ENCODE measurements at regions of chr12 and their contacts with region 1.

Region 1: GRCh38 chr12:59055204-59055839 is 135.0 kb upstream of the LRIG3 start:
- DNase-seq: peak; percentile 88
- H3K4me3 Mint-ChIP-seq: peak overlapping the region; percentile 9
- H3K27ac Mint-ChIP-seq: peak overlapping the region; percentile 94
- H3K4me1 Mint-ChIP-seq: peaks cover 28% of the 10 kb centered on the region
- H3K27me3 Mint-ChIP-seq: no peaks in the 10 kb centered on the region
- CTCF ChIP-seq: no peak

Region 2: DNA sequence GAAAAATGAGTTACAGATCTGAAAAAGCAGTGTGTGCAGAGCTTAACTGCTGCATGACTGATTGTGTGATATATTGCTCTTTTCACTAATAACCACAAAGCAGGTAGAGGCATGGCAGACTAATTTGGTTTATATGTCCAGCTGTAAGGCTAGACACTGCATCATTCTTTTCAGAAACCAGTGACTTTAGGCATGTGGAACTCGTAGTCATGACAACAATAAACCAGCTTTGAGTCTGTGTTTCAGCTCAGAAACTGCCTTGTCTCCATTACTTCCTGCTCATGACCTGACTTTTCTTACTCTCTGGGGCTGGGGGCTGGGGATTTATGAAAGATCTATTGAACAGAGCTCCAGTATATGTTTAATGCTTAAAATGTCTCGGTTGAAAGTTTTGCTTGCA is 11.8 kb after region 1 on chr12:
- CTCF ChIA-PET with region 1: interaction called, 8 read pairs
- POLR2A ChIA-PET with region 1: interaction called, 389 read pairs
- intact Hi-C with region 1: no loop called
- DNase-seq: no peak
- H3K4me3 Mint-ChIP-seq: no peak overlapping the region
- H3K27ac Mint-ChIP-seq: peak overlapping the region; percentile 9
- H3K4me1 Mint-ChIP-seq: peaks cover 44% of the 10 kb centered on the region
- H3K27me3 Mint-ChIP-seq: no peaks in the 10 kb centered on the region
- CTCF ChIP-seq: no peak